ENCODE measurements at regions of chr3 and their contacts with region 1.

Region 1: GRCh38 chr3:183884427-183885296 is at the start of gene PARL:
- DNase-seq: peak; percentile 93
- H3K4me3 Mint-ChIP-seq: peak within 1 kb of the TSS; percentile 98
- H3K27ac Mint-ChIP-seq: peak within 1 kb of the TSS; percentile 99
- H3K4me1 Mint-ChIP-seq: peaks cover 35% of the 10 kb centered on the region
- H3K27me3 Mint-ChIP-seq: no peaks in the 10 kb centered on the region
- total RNA-seq, gene PARL: 93.7 and 98.2 TPM in 2 replicates

Region 2: GRCh38 chr3:183468424-183468823 is 416.2 kb before region 1 on chr3:
- intact Hi-C with region 1: loop called (anchors 1 kb)
- DNase-seq: no peak
- H3K4me3 Mint-ChIP-seq: peak overlapping the region; percentile 12
- H3K27ac Mint-ChIP-seq: peak overlapping the region; percentile 75
- H3K4me1 Mint-ChIP-seq: peaks cover 16% of the 10 kb centered on the region
- H3K27me3 Mint-ChIP-seq: peaks cover 2% of the 10 kb centered on the region

Region 3: GRCh38 chr3:183825456-183826161 is 59.1 kb before region 1 on chr3 and contains the start of gene MAP6D1:
- intact Hi-C with region 1: loop called (anchors 1 kb)
- DNase-seq: peak; percentile 5
- H3K4me3 Mint-ChIP-seq: peak within 1 kb of the TSS; percentile 78
- H3K27ac Mint-ChIP-seq: peak within 1 kb of the TSS; percentile 8
- H3K4me1 Mint-ChIP-seq: peaks cover 9% of the 10 kb centered on the region
- H3K27me3 Mint-ChIP-seq: peaks cover 11% of the 10 kb centered on the region
- total RNA-seq, gene MAP6D1: 2.1 and 2.2 TPM in 2 replicates

Region 4: GRCh38 chr3:183854318-183855035 is 30.2 kb before region 1 on chr3:
- intact Hi-C with region 1: no loop called
- DNase-seq: no peak
- H3K4me3 Mint-ChIP-seq: no peak overlapping the region
- H3K27ac Mint-ChIP-seq: no peak overlapping the region
- H3K4me1 Mint-ChIP-seq: no peaks in the 10 kb centered on the region
- H3K27me3 Mint-ChIP-seq: no peaks in the 10 kb centered on the region

Region 5: GRCh38 chr3:183868796-183869195 is 15.9 kb before region 1 on chr3:
- intact Hi-C with region 1: no loop called
- DNase-seq: no peak
- H3K4me3 Mint-ChIP-seq: no peak overlapping the region
- H3K27ac Mint-ChIP-seq: no peak overlapping the region
- H3K4me1 Mint-ChIP-seq: peaks cover 25% of the 10 kb centered on the region
- H3K27me3 Mint-ChIP-seq: no peaks in the 10 kb centered on the region

Region 6: DNA sequence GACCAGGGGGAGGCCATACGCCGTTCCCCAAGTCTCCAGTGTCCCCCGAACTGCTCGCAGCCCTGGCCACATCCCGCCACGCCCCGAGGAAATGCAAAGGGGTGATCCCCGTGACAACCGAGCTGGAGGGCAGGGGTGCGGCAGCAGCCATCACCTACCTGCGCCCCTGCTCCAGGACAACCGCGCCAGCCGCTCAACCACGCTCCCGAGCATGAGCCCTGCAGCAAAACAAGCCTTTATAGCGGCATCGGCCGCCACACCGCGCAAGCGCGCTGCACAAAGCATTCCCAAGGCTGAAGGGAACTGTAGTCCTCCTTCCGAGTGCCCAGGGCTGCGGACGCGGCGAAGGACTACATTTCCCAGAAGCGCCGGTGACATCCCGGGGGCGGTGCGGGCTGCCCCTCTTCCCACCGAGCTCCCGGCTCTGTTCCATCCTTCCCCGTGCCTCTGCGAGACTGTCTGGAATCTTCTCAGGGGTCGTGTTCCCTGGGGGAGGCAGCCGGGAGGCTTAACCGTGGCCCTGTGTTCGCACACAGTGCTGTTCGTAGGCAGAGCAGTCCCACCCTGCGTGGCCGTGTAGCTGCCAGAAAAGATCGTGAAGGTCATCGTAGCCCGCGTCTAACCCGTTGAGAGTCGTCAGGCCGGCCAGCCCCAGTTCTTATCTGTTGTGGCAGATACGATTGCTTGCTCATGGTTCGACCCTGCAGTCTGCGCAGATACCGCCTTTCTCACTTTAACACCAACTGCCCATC is 133.2 kb after region 1 on chr3 and contains the start of gene ABCC5:
- intact Hi-C with region 1: loop called (anchors 1 kb)
- DNase-seq: peak; percentile 78
- H3K4me3 Mint-ChIP-seq: peak within 1 kb of the TSS; percentile 99
- H3K27ac Mint-ChIP-seq: peak within 1 kb of the TSS; percentile 85
- H3K4me1 Mint-ChIP-seq: peaks cover 30% of the 10 kb centered on the region
- H3K27me3 Mint-ChIP-seq: peaks cover 23% of the 10 kb centered on the region
- total RNA-seq, gene ABCC5: 18.0 and 18.7 TPM in 2 replicates

Region 7: DNA sequence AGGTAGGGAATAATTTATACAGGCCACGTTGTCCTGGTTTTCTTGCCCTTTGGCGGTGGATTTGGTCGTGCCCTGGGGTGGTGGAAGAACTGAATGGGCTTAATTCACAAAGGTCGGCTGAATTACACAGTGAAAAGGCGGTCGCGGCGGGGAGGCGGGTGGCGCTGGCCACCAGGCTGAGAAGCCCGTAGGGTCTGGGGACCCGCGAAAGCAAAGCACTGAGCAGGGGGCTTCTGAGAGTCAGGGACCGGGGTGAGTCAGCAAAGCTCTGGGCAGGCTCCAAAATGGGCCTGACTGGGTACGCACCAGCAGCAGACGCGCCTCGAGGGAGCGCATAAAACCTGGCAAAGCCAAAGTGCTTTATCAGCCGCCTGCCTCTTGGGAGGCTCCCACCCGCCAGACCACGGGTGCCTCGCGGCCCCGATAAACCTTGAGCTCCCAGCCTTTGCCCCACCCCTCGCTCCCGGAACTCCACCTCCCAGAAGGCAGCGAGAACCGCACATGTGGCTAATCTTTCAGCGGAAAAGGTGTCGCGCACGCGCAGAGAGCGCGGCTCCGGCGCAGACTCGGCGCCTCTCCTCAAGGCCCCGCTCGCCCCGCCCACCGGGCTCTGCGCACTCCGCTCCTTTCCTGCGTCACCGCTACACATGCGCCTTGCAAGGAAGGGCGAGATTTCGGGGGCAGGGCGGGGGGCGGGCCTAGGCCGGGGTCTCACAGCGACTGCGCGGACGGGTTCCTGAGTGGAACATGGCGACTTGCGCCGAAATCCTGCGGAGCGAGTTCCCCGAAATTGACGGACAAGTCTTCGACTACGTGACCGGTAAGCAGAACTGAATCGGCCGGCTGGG is 301.0 kb after region 1 on chr3 and contains the start of gene ABCF3:
- intact Hi-C with region 1: loop called (anchors 5 kb)
- DNase-seq: peak; percentile 99
- H3K4me3 Mint-ChIP-seq: peak within 1 kb of the TSS; percentile 98
- H3K27ac Mint-ChIP-seq: peak within 1 kb of the TSS; percentile 89
- H3K4me1 Mint-ChIP-seq: peaks cover 25% of the 10 kb centered on the region
- H3K27me3 Mint-ChIP-seq: no peaks in the 10 kb centered on the region
- total RNA-seq, gene ABCF3: 75.2 and 76.4 TPM in 2 replicates

Measured in activated T-helper 1 cell treated with anti-CD3 and anti-CD28 coated beads, Interleukin-12 subunit alpha, Interleukin-12 subunit beta, Interleukin-2, Interleukin-4 antibody, amounts not matched to agents 30 ng/mL and 10 ng/mL and 1 ng/mL, durations not matched to agents 14 hours and 24 hours and 36 hours (primary cell).